ENCODE measurements at regions of chr5 and their contacts with region 1.

Region 1: GRCh38 chr5:172868924-172869591 is 35.0 kb downstream of the ERGIC1 start:
- DNase-seq: no peak
- CTCF ChIP-seq: no peak

Region 2: DNA sequence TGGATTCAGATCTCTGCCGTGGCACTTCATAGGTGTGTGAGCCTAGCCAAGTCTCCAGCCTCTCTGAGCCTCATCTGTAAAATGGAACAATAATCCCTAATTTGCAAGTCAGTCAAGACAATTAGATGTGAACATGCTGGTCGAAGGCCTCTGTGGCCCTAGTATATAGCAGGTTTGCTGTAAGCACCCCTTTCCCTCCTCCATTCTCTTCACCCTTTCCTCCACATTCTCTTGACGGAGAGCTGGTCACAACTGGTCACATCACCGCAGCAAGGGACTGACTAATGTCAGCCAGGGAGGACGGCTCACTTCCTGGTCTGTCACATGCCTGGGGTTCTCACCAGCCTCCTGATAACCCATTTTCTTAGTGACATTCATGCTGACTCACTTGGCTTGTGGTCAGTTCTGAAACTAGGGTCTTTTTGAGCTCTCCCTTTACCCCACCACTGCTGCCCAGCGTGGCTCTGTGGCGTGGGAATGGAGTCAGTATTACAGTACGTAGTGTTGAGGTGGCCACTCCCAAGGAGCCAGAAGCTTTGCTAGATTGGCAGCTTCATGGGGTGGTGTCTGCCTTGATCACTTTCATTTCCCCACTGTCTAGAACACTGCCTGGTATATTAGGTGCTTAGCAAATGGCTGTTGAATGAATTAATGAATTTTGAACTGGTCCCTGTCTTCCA is 12.8 kb after region 1 on chr5:
- CTCF ChIA-PET with region 1: interaction called, 16 read pairs
- POLR2A ChIA-PET with region 1: no interaction called
- DNase-seq: peak; percentile 77
- CTCF ChIP-seq: no peak